Activated CD4-positive, alpha-beta T cell treated with anti-CD3 and anti-CD28 coated beads for 36 hours (primary cell): ENCODE measurements at regions of chr5 and their contacts with region 1.

Region 1: DNA sequence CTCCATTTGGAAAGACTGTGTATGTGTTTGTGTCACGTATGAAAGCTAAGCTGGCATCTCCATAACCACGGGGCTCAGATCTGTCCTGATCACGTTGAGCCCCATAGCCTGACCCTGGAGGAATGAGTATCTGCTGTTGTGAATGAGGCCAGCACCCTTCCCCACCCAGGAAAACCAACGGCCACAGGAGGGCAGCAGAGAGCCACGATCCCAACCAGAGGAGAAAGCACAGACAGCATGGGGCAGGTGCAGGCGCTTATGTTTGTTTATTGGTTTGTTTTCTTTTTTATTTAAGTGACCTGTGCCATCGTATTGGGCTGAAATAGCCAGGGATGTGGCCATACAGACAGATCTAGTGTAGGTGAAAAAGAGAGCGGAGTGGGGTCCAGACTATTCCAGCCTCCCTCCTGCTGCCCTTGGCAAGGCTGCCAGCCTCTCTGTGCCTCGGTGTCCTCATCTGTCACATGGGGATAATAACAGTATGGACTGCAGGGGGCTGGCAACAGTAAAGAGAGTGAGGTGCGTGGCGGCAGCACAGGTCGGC is 12.0 kb downstream of the OR2V2 start:
- DNase-seq: peak; percentile 96
- ATAC-seq: peak; percentile 76
- H3K4me3 Mint-ChIP-seq: peak overlapping the region; percentile 18
- H3K27ac Mint-ChIP-seq: peak overlapping the region; percentile 88
- H3K4me1 Mint-ChIP-seq: peaks cover 42% of the 10 kb centered on the region
- H3K27me3 Mint-ChIP-seq: peaks cover 3% of the 10 kb centered on the region

Region 2: GRCh38 chr5:180784497-180785097 is 374.8 kb before region 1 on chr5:
- CTCF ChIA-PET with region 1: no interaction called
- POLR2A ChIA-PET with region 1: no interaction called
- intact Hi-C with region 1: loop called in 1 of 2 experiments (anchors 2 kb)
- DNase-seq: peak; percentile 86
- ATAC-seq: peak; percentile 74
- H3K4me3 Mint-ChIP-seq: no peak overlapping the region
- H3K27ac Mint-ChIP-seq: no peak overlapping the region
- H3K4me1 Mint-ChIP-seq: peaks cover 22% of the 10 kb centered on the region
- H3K27me3 Mint-ChIP-seq: no peaks in the 10 kb centered on the region

Region 3: GRCh38 chr5:180810210-180810958 is 349.0 kb before region 1 on chr5:
- CTCF ChIA-PET with region 1: no interaction called
- POLR2A ChIA-PET with region 1: no interaction called
- intact Hi-C with region 1: loop called in 1 of 2 experiments (anchors 2 kb)
- DNase-seq: peak; percentile 98
- ATAC-seq: peak; percentile 79
- H3K4me3 Mint-ChIP-seq: peak overlapping the region; percentile 91
- H3K27ac Mint-ChIP-seq: peak overlapping the region; percentile 97
- H3K4me1 Mint-ChIP-seq: peaks cover 72% of the 10 kb centered on the region
- H3K27me3 Mint-ChIP-seq: no peaks in the 10 kb centered on the region

Region 4: DNA sequence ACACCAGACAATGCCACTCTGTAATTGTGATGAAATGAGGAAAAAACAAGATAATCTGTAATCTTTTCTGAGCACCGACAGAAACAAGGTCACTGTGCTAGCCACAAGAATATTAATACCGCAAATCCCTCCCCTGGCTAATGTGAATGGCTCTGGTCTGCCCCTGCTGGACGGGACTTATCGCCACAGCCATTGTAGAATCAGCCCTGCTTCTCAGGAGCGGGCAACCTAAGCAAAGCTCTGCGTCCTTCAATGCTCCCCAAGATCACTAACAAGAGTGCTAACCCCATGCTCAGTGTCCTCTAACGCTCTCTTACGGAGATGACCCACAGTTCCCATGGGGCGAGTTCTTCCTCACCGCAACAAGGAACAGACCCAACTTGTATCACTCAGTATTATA is 71.1 kb before region 1 on chr5:
- CTCF ChIA-PET with region 1: no interaction called
- POLR2A ChIA-PET with region 1: no interaction called
- intact Hi-C with region 1: no loop called
- DNase-seq: no peak
- ATAC-seq: no peak
- H3K4me3 Mint-ChIP-seq: no peak overlapping the region
- H3K27ac Mint-ChIP-seq: no peak overlapping the region
- H3K4me1 Mint-ChIP-seq: no peaks in the 10 kb centered on the region
- H3K27me3 Mint-ChIP-seq: peaks cover 37% of the 10 kb centered on the region

Region 5: DNA sequence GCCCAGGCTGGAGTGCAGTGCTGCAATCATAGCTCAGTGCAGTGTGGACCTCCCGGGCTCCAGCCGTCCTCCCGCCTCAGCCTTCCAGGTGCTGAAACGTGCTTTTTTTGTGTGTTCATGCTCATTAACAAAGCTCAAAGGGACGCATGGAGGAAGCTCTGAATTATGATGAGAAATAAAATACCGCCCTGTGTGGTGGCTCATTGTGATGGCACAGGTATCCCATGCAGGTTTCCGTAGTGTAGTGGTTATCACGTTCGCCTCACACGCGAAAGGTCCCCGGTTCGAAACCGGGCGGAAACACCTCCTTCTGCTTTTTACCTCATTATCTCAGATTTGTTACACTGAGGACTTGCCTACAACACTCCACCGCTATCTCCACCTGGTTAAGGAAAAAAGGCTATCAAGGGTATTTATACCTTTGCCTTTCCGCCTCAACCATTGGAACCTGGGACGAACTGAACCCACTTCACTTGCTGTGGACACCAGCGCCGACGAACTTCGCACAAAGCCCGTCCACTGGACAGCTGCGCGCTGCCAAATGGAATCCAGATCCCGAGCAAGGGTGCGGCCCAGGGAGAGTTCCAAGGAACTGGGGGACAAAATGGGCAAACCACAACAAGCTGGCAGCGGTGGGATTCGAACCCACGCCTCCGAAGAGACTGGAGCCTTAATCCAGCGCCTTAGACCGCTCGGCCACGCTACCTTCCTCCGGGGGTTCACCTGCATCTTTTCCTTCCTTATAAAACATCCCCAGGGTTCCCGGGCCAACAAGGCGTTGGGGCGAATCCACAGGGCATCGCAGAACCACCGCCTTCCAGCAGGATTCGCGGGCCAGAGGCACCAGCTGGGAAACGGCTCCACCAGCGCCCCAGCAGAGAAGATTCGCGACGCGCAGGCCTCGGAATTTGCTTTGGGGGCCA is 14.3 kb after region 1 on chr5:
- CTCF ChIA-PET with region 1: interaction called, 6 read pairs
- POLR2A ChIA-PET with region 1: no interaction called
- intact Hi-C with region 1: loop called in 1 of 2 experiments (anchors 1 kb)
- DNase-seq: peak; percentile 86
- ATAC-seq: peak; percentile 80
- H3K4me3 Mint-ChIP-seq: peak overlapping the region; percentile 77
- H3K27ac Mint-ChIP-seq: peak overlapping the region; percentile 94
- H3K4me1 Mint-ChIP-seq: peaks cover 47% of the 10 kb centered on the region
- H3K27me3 Mint-ChIP-seq: peaks cover 19% of the 10 kb centered on the region

Region 6: GRCh38 chr5:181191529-181192394 is 32.4 kb after region 1 on chr5:
- CTCF ChIA-PET with region 1: interaction called, 5 read pairs
- POLR2A ChIA-PET with region 1: interaction called, 8 read pairs
- intact Hi-C with region 1: loop called (anchors 2 kb)
- DNase-seq: peak; percentile 96
- ATAC-seq: peak; percentile 68
- H3K4me3 Mint-ChIP-seq: peak overlapping the region; percentile 88
- H3K27ac Mint-ChIP-seq: peak overlapping the region; percentile 97
- H3K4me1 Mint-ChIP-seq: peaks cover 29% of the 10 kb centered on the region
- H3K27me3 Mint-ChIP-seq: no peaks in the 10 kb centered on the region

Region 7: GRCh38 chr5:181223058-181223728 is 63.8 kb after region 1 on chr5 and contains the start of gene TRIM41:
- CTCF ChIA-PET with region 1: no interaction called
- POLR2A ChIA-PET with region 1: interaction called, 3 read pairs
- intact Hi-C with region 1: loop called in 1 of 2 experiments (anchors 1 kb)
- DNase-seq: peak; percentile 98
- ATAC-seq: peak; percentile 64
- H3K4me3 Mint-ChIP-seq: peak within 1 kb of the TSS; percentile 87
- H3K27ac Mint-ChIP-seq: peak within 1 kb of the TSS; percentile 95
- H3K4me1 Mint-ChIP-seq: peaks cover 56% of the 10 kb centered on the region
- H3K27me3 Mint-ChIP-seq: no peaks in the 10 kb centered on the region
- total RNA-seq, gene TRIM41: 27.0 to 30.7 TPM